ENCODE measurements at regions of chr21 and their contacts with region 1.

Region 1: GRCh38 chr21:43938751-43939442 is 73.2 kb upstream of the TRAPPC10 start:
- DNase-seq: peak; percentile 71 to 91 (median 91)
- ATAC-seq: peak; percentile 82
- H3K4me3 ChIP-seq: no peak overlapping the region
- H3K27ac ChIP-seq: peak overlapping the region; percentile 18
- H3K4me1 ChIP-seq: peaks cover 4% of the 10 kb centered on the region
- H3K27me3 ChIP-seq: no peaks in the 10 kb centered on the region

Region 2: GRCh38 chr21:43789276-43790009 is 149.5 kb before region 1 on chr21 and contains the start of gene RRP1:
- intact Hi-C with region 1: loop called in 1 of 4 experiments (anchors 10 kb)
- DNase-seq: peak; percentile 90 to 97 (median 97)
- ATAC-seq: peak; percentile 96
- H3K4me3 ChIP-seq: peak within 1 kb of the TSS; percentile 83
- H3K27ac ChIP-seq: peak within 1 kb of the TSS; percentile 89
- H3K4me1 ChIP-seq: no peaks in the 10 kb centered on the region
- H3K27me3 ChIP-seq: no peaks in the 10 kb centered on the region
- total RNA-seq, gene RRP1: 9.6 to 12.9 (median 11.1) TPM

Region 3: DNA sequence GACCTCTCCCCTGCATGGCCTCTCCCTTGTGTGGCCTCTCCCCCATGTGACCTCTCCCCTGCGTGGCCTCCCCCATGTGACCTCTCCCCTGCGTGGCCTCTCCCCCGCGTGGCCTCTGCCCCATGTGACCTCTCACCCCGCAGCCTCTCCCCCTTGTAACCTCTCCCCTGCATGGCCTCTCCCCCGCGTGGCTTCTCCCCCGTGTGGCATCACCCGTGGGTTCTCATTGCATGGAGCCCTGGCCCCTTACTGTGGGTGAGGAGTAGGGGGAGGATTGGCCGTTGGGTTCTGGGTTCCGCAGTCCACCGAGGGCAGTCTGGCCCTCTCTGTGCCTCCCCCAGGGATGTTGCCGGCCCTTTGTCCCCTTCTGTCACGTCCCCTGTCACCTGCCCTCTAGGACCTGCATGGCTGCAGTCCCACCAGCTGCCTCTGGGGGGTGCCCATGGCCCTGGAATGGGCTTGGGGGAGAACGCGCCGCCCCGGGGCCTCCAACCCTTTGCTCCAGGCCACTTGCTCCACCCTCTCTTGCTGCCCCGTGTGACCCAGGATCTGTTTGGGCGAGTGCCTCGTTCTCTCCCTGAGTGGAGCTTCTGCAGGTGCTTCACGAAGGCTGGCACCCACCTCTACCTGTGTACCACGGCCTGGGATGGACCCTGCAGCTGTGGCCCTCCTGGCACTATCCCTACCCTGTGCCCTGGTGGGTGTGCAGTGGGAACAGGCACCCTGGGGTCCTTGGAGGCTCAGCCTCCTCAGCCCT is 128.2 kb before region 1 on chr21:
- intact Hi-C with region 1: loop called in 1 of 4 experiments (anchors 5 kb)
- DNase-seq: peak; percentile 87 to 96 (median 94)
- ATAC-seq: peak; percentile 73 to 81
- H3K4me3 ChIP-seq: no peak overlapping the region
- H3K27ac ChIP-seq: no peak overlapping the region
- H3K4me1 ChIP-seq: no peaks in the 10 kb centered on the region
- H3K27me3 ChIP-seq: no peaks in the 10 kb centered on the region

Region 4: GRCh38 chr21:43974791-43975481 is 36.0 kb after region 1 on chr21:
- intact Hi-C with region 1: no loop called
- DNase-seq: peak in 1 of 3 donors; percentile 42
- ATAC-seq: peak; percentile 24 to 30
- H3K4me3 ChIP-seq: no peak overlapping the region
- H3K27ac ChIP-seq: no peak overlapping the region
- H3K4me1 ChIP-seq: peaks cover 3% of the 10 kb centered on the region
- H3K27me3 ChIP-seq: no peaks in the 10 kb centered on the region

Region 5: DNA sequence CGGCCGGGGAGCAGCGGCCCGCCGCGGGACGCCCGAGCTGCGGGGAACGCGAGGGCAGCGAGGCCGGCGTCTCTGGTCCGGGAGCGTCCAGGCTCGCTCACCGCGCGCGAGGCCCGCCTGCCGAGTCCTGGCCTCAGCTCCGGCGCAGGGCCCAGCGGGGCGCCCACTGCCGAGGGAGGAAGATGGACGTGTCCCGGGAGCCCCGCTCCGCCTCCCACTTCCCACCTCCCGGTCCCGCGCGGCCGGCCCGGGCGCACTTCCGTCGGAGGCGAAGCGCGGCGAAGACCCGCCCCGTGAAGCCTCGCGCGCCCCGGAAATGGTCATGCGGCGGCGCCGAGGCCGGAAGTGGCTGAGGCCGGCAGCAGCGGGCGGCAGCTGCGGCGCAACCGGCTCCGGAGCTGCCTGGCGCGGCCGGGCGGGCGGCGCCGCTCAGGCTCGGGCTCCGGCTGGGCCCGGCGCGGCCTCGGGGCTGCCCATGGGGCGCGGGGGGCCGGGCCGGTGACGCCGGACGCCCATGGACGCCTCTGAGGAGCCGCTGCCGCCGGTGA is 73.2 kb after region 1 on chr21 and contains the start of gene TRAPPC10:
- intact Hi-C with region 1: no loop called
- DNase-seq: peak; percentile 85 to 94 (median 94)
- ATAC-seq: peak; percentile 92 to 94
- H3K4me3 ChIP-seq: peak within 1 kb of the TSS; percentile 99
- H3K27ac ChIP-seq: peak within 1 kb of the TSS; percentile 93
- H3K4me1 ChIP-seq: no peaks in the 10 kb centered on the region
- H3K27me3 ChIP-seq: no peaks in the 10 kb centered on the region
- total RNA-seq, gene TRAPPC10: 18.0 to 23.3 (median 19.1) TPM

Measured in right cardiac atrium (tissue), 5 donors.